ENCODE measurements at regions of chr10 and their contacts with region 1.

Region 1: DNA sequence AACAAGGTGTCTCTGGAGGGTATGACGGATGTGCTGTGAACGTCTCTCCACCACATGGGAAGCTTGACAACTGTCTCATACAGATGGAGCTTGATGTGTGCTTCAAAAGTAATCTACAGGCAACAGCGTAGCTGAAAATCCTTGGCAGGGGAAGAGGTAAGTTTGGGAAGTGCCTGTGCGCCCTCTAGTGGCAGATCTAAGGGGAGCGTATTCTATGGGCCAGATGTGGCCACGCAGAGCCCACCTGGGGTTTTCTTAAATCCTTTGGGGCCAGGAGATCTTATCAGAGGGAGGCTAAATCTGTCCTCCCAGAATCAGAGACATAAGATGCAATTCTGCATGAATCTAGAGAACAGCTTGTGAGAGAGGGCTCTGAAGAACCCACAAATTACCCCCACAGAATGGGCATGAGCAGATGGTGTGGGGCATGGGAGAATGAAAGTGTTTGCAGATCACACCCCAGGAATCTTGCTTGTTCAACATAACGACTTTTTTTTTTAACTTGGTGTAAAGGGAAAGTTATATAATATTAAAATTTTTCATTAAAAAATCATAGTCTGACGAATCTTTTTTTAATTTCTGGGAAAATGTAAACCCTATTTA is 91.2 kb upstream of the MPP7 start:
- DNase-seq: peak; percentile 31 to 73
- ATAC-seq: peak; percentile 98 to 99
- H3K4me3 ChIP-seq: no peak overlapping the region
- H3K27ac ChIP-seq: no peak overlapping the region
- H3K4me1 ChIP-seq: no peaks in the 10 kb centered on the region
- CTCF ChIP-seq: peak; percentile 90
- EP300 ChIP-seq: no peak
- POLR2A ChIP-seq: no peak
- RAD21 ChIP-seq: peak; percentile 69 to 76

Region 2: DNA sequence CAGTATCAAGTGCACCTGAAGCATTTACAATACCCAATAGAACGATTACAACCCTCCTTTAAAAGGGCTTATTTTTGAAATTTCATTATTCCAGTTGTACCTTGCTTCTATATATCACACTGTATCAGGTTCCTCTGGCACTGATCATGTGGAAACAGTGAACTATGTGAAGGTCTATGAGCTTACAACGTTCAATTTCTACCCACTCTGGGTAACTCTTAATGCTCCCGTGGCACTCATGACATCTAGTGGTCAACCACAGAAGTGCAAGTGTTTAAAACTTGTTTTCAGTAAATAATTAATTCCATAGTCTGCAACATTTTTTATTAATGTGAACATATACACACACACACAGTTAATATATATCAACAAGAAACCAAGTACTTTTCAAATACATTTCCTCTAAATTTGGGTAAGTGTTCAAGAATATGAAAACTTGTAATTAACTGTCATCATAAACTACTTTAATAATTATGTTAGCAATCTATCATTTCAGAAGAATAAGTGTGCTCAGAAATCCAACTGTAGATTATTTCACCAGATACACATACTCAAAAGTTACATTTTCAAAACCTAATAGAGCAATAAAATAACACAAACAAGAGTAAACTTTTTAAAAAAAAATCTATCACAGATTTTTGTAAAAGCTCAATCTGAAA is 152.2 kb before region 1 on chr10:
- CTCF ChIA-PET with region 1: interaction called, 10 read pairs
- POLR2A ChIA-PET with region 1: no interaction called
- DNase-seq: peak; percentile 43 to 53
- ATAC-seq: peak; percentile 78 to 80; a peak in 5 of 6 replicates
- H3K4me3 ChIP-seq: no peak overlapping the region
- H3K27ac ChIP-seq: no peak overlapping the region
- H3K4me1 ChIP-seq: no peaks in the 10 kb centered on the region
- CTCF ChIP-seq: peak; percentile 93
- EP300 ChIP-seq: no peak
- POLR2A ChIP-seq: no peak
- RAD21 ChIP-seq: peak; percentile 80 to 83

Region 3: GRCh38 chr10:28266449-28267224 is 127.4 kb before region 1 on chr10:
- CTCF ChIA-PET with region 1: interaction called, 10 read pairs
- POLR2A ChIA-PET with region 1: no interaction called
- DNase-seq: no peak
- ATAC-seq: no peak
- H3K4me3 ChIP-seq: no peak overlapping the region
- H3K27ac ChIP-seq: no peak overlapping the region
- H3K4me1 ChIP-seq: no peaks in the 10 kb centered on the region
- CTCF ChIP-seq: no peak
- EP300 ChIP-seq: no peak
- POLR2A ChIP-seq: no peak
- RAD21 ChIP-seq: no peak

Region 4: GRCh38 chr10:28355376-28355775 is 38.7 kb before region 1 on chr10:
- CTCF ChIA-PET with region 1: no interaction called
- POLR2A ChIA-PET with region 1: no interaction called
- DNase-seq: no peak
- ATAC-seq: no peak
- H3K4me3 ChIP-seq: no peak overlapping the region
- H3K27ac ChIP-seq: no peak overlapping the region
- H3K4me1 ChIP-seq: no peaks in the 10 kb centered on the region
- CTCF ChIP-seq: no peak
- EP300 ChIP-seq: no peak
- POLR2A ChIP-seq: no peak
- RAD21 ChIP-seq: no peak

Region 5: DNA sequence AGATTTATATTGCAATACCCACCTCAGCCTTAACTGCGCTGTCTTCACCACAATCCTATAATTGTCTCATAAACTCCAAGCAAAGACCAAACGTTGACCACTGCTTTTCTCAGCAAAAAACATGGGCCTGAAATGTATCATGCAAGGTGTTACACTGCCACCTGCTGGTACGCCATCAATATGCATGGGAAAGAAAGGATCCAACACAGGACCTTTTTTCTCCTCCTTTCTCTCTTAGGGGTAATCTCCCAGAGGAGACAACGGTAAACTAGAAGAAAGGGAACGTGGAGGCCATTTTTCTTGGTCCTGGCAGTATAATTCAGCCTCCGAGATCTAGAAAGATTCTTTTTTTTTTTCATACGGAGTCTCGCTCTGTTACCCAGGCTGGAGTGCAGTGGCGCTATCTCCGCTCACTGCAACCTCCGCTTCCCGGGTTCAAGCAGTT is 12.1 kb before region 1 on chr10:
- CTCF ChIA-PET with region 1: interaction called, 51 read pairs
- POLR2A ChIA-PET with region 1: no interaction called
- DNase-seq: peak; percentile 65 to 89
- ATAC-seq: peak; percentile 93 to 98
- H3K4me3 ChIP-seq: peak overlapping the region; percentile 29; the same call in 2 of the 3 replicates
- H3K27ac ChIP-seq: no peak overlapping the region
- H3K4me1 ChIP-seq: no peaks in the 10 kb centered on the region
- CTCF ChIP-seq: peak; percentile 96
- EP300 ChIP-seq: no peak
- POLR2A ChIP-seq: no peak
- RAD21 ChIP-seq: peak; percentile 91 to 96

Region 6: GRCh38 chr10:28425422-28425821 is 31.4 kb after region 1 on chr10:
- CTCF ChIA-PET with region 1: interaction called, 10 read pairs
- POLR2A ChIA-PET with region 1: no interaction called
- DNase-seq: no peak
- ATAC-seq: no peak
- H3K4me3 ChIP-seq: no peak overlapping the region
- H3K27ac ChIP-seq: no peak overlapping the region
- H3K4me1 ChIP-seq: no peaks in the 10 kb centered on the region
- CTCF ChIP-seq: no peak
- EP300 ChIP-seq: no peak
- POLR2A ChIP-seq: no peak
- RAD21 ChIP-seq: no peak

Region 7: DNA sequence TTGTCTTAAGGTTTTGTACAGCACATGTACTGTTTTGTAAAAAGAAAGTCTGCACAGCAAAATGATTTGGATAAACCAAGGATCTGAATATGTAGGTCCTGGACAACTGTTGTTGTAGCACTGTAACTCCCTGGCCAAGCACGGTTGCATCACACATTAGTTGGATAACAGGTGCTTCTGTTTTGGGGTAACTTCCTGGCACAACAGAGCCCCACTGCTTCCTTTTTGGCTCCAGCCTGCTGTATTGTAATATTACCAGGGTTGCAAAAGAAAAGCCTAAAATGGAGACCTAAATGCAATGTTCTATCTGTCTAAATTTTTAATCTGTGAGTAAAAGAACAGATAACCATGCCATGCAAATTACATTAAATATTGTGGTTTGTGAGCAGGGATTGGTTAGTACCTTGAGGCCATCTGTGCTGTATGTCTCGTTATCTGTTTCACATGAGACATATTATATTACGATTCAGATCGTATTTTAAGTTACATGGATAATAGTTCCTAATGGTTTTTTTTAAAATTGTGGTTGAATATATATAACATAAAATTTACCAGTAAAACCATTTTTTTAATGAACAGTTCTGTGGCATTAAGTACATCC is 111.4 kb after region 1 on chr10:
- CTCF ChIA-PET with region 1: no interaction called
- POLR2A ChIA-PET with region 1: no interaction called
- DNase-seq: no peak
- ATAC-seq: no peak
- H3K4me3 ChIP-seq: no peak overlapping the region
- H3K27ac ChIP-seq: no peak overlapping the region
- H3K4me1 ChIP-seq: no peaks in the 10 kb centered on the region
- CTCF ChIP-seq: no peak
- EP300 ChIP-seq: no peak
- POLR2A ChIP-seq: no peak
- RAD21 ChIP-seq: no peak